ENCODE measurements at regions of chr15 and their contacts with region 1.

Region 1: GRCh38 chr15:34865531-34865930 is 70.2 kb upstream of the ACTC1 start:
- DNase-seq: no peak
- H3K4me3 ChIP-seq: no peak overlapping the region
- H3K27ac ChIP-seq: no peak overlapping the region
- H3K4me1 ChIP-seq: no peaks in the 10 kb centered on the region
- H3K27me3 ChIP-seq: no peaks in the 10 kb centered on the region
- CTCF ChIP-seq: no peak
- EP300 ChIP-seq: no peak
- POLR2A ChIP-seq: no peak

Region 2: GRCh38 chr15:33894193-33894592 is 971.3 kb before region 1 on chr15:
- in situ Hi-C with region 1: no loop called
- intact Hi-C with region 1: loop called (anchors 5 kb)
- DNase-seq: no peak
- H3K4me3 ChIP-seq: no peak overlapping the region
- H3K27ac ChIP-seq: no peak overlapping the region
- H3K4me1 ChIP-seq: no peaks in the 10 kb centered on the region
- H3K27me3 ChIP-seq: no peaks in the 10 kb centered on the region
- CTCF ChIP-seq: no peak
- EP300 ChIP-seq: no peak
- POLR2A ChIP-seq: no peak

Region 3: DNA sequence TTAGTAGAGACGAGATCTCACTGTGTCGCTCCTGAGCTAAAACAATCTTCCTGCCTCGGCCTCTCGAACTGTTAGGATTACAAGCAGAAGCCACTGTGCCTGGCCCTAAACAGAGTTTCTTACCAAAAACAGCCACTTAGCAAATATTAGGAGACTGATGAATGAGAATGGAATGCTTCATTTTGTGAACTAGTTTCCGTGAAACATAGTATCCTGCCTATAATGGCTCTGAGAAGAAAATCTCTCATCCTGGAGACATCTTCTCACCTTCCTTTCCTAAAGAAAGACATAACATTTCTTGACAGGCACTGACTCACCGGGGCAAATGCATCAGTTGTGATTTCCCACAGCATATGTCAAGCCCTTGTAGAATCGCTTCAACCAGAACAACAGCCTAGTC is 155.7 kb before region 1 on chr15:
- in situ Hi-C with region 1: no loop called
- intact Hi-C with region 1: no loop called
- DNase-seq: no peak
- H3K4me3 ChIP-seq: no peak overlapping the region
- H3K27ac ChIP-seq: no peak overlapping the region
- H3K4me1 ChIP-seq: no peaks in the 10 kb centered on the region
- H3K27me3 ChIP-seq: no peaks in the 10 kb centered on the region
- CTCF ChIP-seq: no peak
- EP300 ChIP-seq: no peak
- POLR2A ChIP-seq: no peak

Region 4: DNA sequence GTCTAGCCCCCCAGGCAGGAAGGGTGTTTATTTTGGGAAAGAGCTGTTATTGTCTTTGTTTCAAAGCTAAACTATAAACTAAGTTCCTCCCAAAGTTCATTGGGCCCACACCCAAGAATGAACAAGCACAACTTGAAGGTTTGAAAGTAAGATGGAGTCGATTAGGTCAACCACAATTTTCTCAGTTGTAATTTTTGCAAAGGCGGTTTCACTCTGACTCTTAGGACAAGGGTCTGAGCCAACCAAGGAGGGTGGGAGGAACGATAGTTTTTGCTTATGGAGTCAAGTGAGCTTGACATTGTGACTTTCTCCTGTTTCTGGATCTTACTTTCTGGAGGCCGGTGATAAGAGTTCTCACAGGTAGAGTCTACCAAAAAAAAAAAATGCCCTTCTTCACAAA is 128.3 kb after region 1 on chr15:
- in situ Hi-C with region 1: no loop called
- intact Hi-C with region 1: no loop called
- DNase-seq: no peak
- H3K4me3 ChIP-seq: no peak overlapping the region
- H3K27ac ChIP-seq: no peak overlapping the region
- H3K4me1 ChIP-seq: peaks cover 0 to 3% (median 1%) of the 10 kb centered on the region in 4 donors
- H3K27me3 ChIP-seq: no peaks in the 10 kb centered on the region
- CTCF ChIP-seq: no peak
- EP300 ChIP-seq: no peak
- POLR2A ChIP-seq: no peak

Measured in transverse colon (tissue), 4 donors.